Heart right ventricle (tissue), 16 donors: ENCODE measurements at regions of chr19 and their contacts with region 1.

Region 1: DNA sequence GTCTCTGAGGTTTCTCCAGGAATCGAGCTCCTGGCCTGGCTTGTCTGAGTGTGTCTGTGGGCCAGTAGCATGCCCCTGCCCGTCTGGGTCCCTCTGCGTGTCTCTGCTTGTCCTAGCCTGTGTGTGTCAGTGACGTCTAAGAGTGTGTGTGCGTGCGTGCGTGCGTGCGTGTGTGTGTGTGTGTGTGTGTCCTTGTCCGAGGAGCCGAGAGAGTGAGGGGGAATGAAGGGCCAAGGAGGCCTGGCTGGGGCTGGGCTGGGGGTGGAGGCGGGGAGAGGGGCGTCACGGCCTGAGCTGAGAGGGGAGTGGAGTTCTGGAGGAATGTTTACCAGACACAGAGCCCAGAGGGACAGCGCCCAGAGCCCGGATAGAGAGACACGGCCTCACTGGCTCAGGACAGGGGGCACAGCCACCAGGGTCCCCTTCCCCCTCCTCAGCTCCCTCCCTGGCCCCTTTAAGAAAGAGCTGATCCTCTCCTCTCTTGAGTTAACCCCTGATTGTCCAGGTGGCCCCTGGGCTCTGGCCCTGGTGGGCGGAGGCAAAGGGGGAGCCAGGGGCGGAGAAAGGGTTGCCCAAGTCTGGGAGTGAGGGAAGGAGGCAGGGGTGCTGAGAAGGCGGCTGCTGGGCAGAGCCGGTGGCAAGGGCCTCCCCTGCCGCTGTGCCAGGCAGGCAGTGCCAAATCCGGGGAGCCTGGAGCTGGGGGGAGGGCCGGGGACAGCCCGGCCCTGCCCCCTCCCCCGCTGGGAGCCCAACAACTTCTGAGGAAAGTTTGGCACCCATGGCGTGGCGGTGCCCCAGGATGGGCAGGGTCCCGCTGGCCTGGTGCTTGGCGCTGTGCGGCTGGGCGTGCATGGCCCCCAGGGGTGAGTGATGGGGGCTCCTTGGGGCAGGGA is at the start of gene AXL:
- DNase-seq: peak; percentile 81 to 82
- ATAC-seq: peak; percentile 72 to 91 (median 84)
- H3K4me3 ChIP-seq: peak within 1 kb of the TSS; percentile 12 to 70 (median 65)
- H3K27ac ChIP-seq: peak within 1 kb of the TSS; percentile 60 to 96 (median 93)
- H3K4me1 ChIP-seq: peaks cover 0 to 23% (median 3%) of the 10 kb centered on the region in 9 donors
- H3K27me3 ChIP-seq: peaks cover 0 to 31% (median 5%) of the 10 kb centered on the region in 7 donors
- CTCF ChIP-seq: no peak
- total RNA-seq, gene AXL: 6.5 to 22.8 (median 9.8) TPM

Region 2: DNA sequence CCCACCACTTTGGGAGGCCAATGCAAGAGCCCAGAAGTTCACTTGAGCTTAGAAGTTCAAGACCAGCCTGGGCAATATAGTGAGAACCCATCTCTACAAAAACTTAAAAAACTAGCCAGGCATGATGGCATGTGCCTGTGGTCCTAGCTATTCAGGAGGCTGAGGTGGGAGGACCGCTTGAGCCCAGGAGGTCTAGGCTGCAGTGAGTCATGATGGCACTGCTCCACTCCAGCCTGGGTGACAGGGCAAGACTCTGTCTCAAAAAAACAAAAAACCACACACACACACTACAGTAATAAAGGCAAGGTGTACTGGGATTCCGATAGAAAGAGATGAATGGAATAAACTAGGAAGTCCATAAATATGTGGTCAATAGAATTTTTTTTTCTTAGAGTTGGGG is 69.0 kb before region 1 on chr19:
- intact Hi-C with region 1: no loop called
- DNase-seq: no peak
- ATAC-seq: no peak
- H3K4me3 ChIP-seq: no peak overlapping the region
- H3K27ac ChIP-seq: no peak overlapping the region
- H3K4me1 ChIP-seq: no peaks in the 10 kb centered on the region
- H3K27me3 ChIP-seq: peaks cover 0 to 31% (median 17%) of the 10 kb centered on the region in 7 donors
- CTCF ChIP-seq: no peak

Region 3: DNA sequence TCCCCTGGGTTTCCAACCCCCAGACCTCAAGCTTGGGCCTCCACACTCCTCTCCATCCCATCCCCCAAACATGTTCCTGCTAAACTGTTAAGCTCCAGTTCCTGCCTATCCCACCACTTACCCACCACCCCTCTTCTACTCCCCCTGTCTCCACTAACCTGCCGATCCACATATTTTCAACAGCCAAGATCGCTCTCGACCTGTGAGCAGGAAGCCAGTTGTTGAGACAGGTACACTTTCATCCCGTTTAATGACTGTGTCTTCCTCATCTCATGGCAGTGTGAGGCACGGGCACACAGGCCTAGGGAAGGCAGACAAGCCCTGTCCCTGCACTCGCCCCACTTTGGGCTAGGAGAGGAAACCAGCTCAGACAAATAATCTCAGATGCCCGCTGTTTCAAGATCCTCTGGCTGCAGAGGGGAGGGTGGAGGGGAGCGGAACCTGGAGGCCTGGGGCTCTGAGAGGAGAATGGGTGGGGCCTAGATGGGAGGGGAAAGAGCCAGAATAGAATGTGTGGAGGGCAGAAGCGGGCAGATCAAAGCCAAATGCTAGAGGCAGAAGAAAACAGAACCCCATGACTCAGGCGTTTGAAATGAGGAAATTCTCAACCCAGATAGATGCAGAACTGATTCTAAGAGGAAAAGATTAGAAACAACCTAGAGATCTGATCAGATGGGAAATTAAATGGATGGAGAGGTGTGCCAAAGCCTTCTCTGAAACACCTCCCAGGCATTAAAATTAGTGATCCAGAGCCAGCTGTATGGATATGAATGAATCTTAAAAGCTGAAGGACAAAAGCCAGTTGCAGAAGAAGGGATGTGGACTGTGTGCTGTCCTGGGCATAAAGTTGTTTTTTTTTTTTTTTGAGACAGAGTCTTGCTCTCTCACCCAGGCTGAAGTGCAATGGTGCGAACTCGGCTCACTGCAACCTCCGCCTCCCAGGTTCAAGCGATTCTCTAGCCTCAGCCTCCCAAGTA is 42.8 kb before region 1 on chr19:
- intact Hi-C with region 1: no loop called
- DNase-seq: no peak
- ATAC-seq: peak in 6 of 8 donors; percentile 38 to 82 (median 64)
- H3K4me3 ChIP-seq: peak overlapping the region in 1 of 10 donors; percentile 31
- H3K27ac ChIP-seq: peak overlapping the region in 1 of 10 donors; percentile 69
- H3K4me1 ChIP-seq: peaks cover 0 to 18% (median 0%) of the 10 kb centered on the region in 9 donors
- H3K27me3 ChIP-seq: peaks cover 0 to 11% (median 4%) of the 10 kb centered on the region in 7 donors
- CTCF ChIP-seq: no peak

Region 4: GRCh38 chr19:41249707-41250423 is 31.0 kb after region 1 on chr19:
- intact Hi-C with region 1: loop called in 1 of 10 experiments (anchors 5 kb)
- DNase-seq: no peak
- ATAC-seq: no peak
- H3K4me3 ChIP-seq: no peak overlapping the region
- H3K27ac ChIP-seq: no peak overlapping the region
- H3K4me1 ChIP-seq: peaks cover 0 to 4% (median 0%) of the 10 kb centered on the region in 9 donors
- H3K27me3 ChIP-seq: peaks cover 0 to 5% (median 0%) of the 10 kb centered on the region in 7 donors
- CTCF ChIP-seq: no peak